GM12878 (cell line): ENCODE measurements at regions of chr5 and their contacts with region 1.

Region 1: DNA sequence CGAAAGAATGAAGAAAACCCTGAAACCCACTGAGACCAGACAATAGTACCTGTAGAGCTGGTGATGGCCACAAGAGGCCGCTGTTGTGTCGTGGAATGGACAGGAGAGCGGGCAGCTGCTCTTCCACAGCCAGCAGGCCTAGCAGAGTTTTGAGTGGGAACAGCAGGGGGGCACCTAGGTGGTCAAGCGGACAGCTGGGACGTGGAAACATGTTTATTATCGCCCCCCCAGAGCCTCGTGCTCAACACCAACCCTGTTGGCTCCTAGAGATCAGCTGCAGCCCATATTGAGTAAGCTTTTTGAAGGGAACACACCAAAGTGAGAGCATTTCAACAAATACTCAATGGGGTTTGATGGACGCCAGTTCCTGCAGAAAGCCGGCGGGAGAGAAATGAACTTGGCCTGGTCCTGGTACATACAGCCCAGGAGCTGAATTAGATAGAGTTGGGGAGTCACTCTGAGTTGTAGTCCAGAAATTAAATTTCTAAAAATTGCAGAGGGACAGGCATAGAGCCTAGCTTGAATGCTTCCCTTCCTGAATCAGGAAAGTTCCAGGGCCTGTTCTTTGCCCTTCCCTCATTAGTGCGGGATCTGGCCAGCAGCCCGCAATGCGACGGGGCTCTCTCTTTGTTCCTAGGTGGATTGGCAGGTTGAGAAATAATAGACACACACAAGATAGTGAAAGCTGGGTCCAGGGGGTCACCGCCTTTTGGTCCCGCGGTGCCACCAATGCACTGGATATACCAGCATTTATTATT is 33.8 kb downstream of the MFAP3 start:
- DNase-seq: peak; percentile 43
- ATAC-seq: peak; percentile 99
- H3K4me3 ChIP-seq: no peak overlapping the region
- H3K27ac ChIP-seq: no peak overlapping the region
- H3K4me1 ChIP-seq: no peaks in the 10 kb centered on the region
- H3K27me3 ChIP-seq: no peaks in the 10 kb centered on the region
- CTCF ChIP-seq: peak; percentile 85 to 98 (median 93)
- EP300 ChIP-seq: no peak
- POLR2A ChIP-seq: no peak
- RAD21 ChIP-seq: peak; percentile 96

Region 2: DNA sequence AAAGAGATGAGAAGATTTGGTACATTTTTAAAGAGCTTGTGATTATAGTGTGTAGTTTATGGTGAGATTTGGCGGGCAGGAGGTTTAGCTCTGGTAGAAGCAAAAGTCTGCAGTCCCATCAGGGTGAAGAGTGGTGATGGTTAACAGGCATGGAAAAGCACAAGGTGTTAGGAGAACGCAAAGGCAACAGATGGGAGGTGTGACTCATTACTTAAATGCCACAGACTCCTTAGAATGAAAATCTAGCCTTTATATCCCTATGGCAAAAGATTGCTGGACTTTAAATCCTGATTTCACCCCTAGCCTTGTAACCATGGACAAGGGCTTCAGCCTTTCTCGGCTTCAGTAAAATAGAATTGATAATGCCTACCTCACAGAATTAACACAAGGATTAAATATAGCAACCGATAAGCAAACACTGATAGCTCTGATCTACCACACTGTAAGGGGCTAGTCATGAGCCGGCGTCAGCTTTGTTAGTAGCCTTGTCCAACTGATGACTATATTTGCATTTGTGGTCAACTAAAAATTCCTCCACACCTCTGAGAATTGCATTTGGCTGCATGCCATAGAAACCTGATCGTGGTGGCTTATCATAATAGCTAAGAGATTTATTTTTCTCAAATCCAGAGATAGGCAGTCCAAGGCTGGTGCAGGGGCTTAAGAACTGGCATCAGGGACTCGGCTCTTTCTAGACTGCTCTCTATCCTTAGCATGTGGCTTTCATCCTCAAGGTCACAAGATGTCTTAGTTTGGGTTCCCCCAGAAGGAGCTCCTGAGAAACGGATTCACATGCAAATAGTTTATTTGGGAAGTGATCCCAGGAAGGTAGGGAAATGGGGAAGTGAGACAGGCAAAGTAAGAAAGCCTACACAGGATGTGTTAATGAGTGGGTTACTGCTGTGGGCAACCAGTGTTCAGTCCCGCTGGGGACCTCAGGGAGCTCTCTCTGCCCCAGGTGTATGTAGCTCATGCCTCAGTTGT is 14.2 kb before region 1 on chr5:
- CTCF ChIA-PET with region 1: interaction called, 25 read pairs
- POLR2A ChIA-PET with region 1: interaction called, 4 read pairs
- RAD21 ChIA-PET with region 1: interaction called, 20 read pairs
- SMC1A ChIA-PET with region 1: interaction called, 17 read pairs
- in situ Hi-C with region 1: no loop called
- intact Hi-C with region 1: no loop called
- DNase-seq: peak; percentile 63
- ATAC-seq: peak; percentile 88
- H3K4me3 ChIP-seq: no peak overlapping the region
- H3K27ac ChIP-seq: peak overlapping the region; percentile 52
- H3K4me1 ChIP-seq: peaks cover 23% of the 10 kb centered on the region
- H3K27me3 ChIP-seq: no peaks in the 10 kb centered on the region
- CTCF ChIP-seq: no peak
- EP300 ChIP-seq: no peak
- POLR2A ChIP-seq: no peak
- RAD21 ChIP-seq: no peak

Region 3: GRCh38 chr5:154179846-154180710 is 107.5 kb after region 1 on chr5:
- CTCF ChIA-PET with region 1: interaction called, 55 read pairs
- POLR2A ChIA-PET with region 1: interaction called, 5 read pairs
- RAD21 ChIA-PET with region 1: interaction called, 28 read pairs
- SMC1A ChIA-PET with region 1: interaction called, 26 read pairs
- in situ Hi-C with region 1: loop called (anchors 10 kb)
- intact Hi-C with region 1: loop called (anchors 1 kb)
- DNase-seq: no peak
- ATAC-seq: peak; percentile 99
- H3K4me3 ChIP-seq: no peak overlapping the region
- H3K27ac ChIP-seq: no peak overlapping the region
- H3K4me1 ChIP-seq: no peaks in the 10 kb centered on the region
- H3K27me3 ChIP-seq: no peaks in the 10 kb centered on the region
- CTCF ChIP-seq: peak; percentile 74 to 84 (median 80)
- EP300 ChIP-seq: no peak
- POLR2A ChIP-seq: no peak
- RAD21 ChIP-seq: peak; percentile 89

Region 4: GRCh38 chr5:154238776-154239481 is 166.3 kb after region 1 on chr5:
- CTCF ChIA-PET with region 1: interaction called, 44 read pairs
- POLR2A ChIA-PET with region 1: interaction called, 3 read pairs
- RAD21 ChIA-PET with region 1: interaction called, 31 read pairs
- SMC1A ChIA-PET with region 1: interaction called, 28 read pairs
- in situ Hi-C with region 1: no loop called
- intact Hi-C with region 1: loop called (anchors 2 kb)
- DNase-seq: peak; percentile 63
- ATAC-seq: peak; percentile 76
- H3K4me3 ChIP-seq: no peak overlapping the region
- H3K27ac ChIP-seq: peak overlapping the region; percentile 57
- H3K4me1 ChIP-seq: peaks cover 59% of the 10 kb centered on the region
- H3K27me3 ChIP-seq: no peaks in the 10 kb centered on the region
- CTCF ChIP-seq: no peak
- EP300 ChIP-seq: no peak
- POLR2A ChIP-seq: no peak
- RAD21 ChIP-seq: no peak

Region 5: DNA sequence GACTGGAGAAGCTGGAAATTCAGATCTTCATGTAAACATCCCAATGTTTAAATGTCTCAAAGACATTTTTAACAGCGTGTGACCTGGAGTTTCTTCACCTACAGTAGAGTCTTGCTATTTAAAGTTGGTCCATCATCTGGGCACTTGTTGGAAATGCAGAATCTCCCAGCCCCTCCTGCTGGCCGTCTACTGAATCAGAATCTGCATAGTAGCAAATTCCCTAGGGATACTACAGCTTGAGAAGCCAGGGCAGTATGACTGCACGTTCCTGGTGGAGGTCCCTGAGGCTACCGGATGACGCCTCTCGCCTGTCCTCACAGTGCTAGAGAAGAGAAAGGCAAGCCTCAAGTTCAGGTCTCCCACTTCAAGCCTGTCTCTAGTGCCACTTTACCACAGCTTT is 388.9 kb after region 1 on chr5:
- CTCF ChIA-PET with region 1: interaction called, 33 read pairs
- POLR2A ChIA-PET with region 1: no interaction called
- RAD21 ChIA-PET with region 1: interaction called, 14 read pairs
- SMC1A ChIA-PET with region 1: interaction called, 13 read pairs
- in situ Hi-C with region 1: no loop called
- intact Hi-C with region 1: no loop called
- DNase-seq: no peak
- ATAC-seq: no peak
- H3K4me3 ChIP-seq: no peak overlapping the region
- H3K27ac ChIP-seq: no peak overlapping the region
- H3K4me1 ChIP-seq: no peaks in the 10 kb centered on the region
- H3K27me3 ChIP-seq: no peaks in the 10 kb centered on the region
- CTCF ChIP-seq: 0 out of 6 replicates have a peak, but pooled peaks of 1 of the 3 experiments have one; percentile 4
- EP300 ChIP-seq: no peak
- POLR2A ChIP-seq: no peak
- RAD21 ChIP-seq: peak; percentile 16; the same call in 1 of the 2 replicates

Region 6: GRCh38 chr5:155402927-155403670 is 1330.5 kb after region 1 on chr5:
- CTCF ChIA-PET with region 1: no interaction called
- POLR2A ChIA-PET with region 1: no interaction called
- RAD21 ChIA-PET with region 1: no interaction called
- SMC1A ChIA-PET with region 1: no interaction called
- in situ Hi-C with region 1: no loop called
- intact Hi-C with region 1: no loop called
- DNase-seq: no peak
- ATAC-seq: no peak
- H3K4me3 ChIP-seq: no peak overlapping the region
- H3K27ac ChIP-seq: no peak overlapping the region
- H3K4me1 ChIP-seq: no peaks in the 10 kb centered on the region
- H3K27me3 ChIP-seq: no peaks in the 10 kb centered on the region
- CTCF ChIP-seq: no peak
- EP300 ChIP-seq: no peak
- POLR2A ChIP-seq: no peak
- RAD21 ChIP-seq: no peak